HEK293T (cell line): ENCODE measurements at regions of chr10 and their contacts with region 1.

Region 1: DNA sequence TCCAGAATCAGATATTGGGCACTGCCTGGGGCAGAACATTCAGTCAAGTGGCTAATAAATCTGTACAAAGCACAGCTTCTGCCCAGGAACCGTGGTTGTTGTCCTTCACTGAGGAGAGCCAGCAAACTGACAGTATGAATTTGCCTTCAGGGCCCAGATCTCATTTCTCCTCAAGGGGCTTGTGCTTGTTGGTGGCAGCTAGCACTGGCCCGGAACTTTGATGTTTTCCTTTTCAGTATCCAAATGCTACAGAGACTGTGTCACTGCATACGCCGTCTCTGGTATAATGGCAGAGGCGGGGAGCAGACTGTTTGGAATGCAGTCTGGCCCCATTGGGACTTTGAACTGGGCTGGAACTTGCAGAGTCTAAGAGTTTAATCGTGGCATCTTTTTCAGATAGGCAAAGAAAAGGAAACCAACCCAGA is 30.4 kb upstream of the ADD3 start:
- DNase-seq: peak; percentile 36

Region 2: GRCh38 chr10:109964318-109964717 is 13.1 kb before region 1 on chr10:
- CTCF ChIA-PET with region 1: interaction called, 10 read pairs
- POLR2A ChIA-PET with region 1: no interaction called
- DNase-seq: no peak